Left ventricle myocardium superior (tissue), 1 donor: ENCODE measurements at regions of chr22 and their contacts with region 1.

Region 1: DNA sequence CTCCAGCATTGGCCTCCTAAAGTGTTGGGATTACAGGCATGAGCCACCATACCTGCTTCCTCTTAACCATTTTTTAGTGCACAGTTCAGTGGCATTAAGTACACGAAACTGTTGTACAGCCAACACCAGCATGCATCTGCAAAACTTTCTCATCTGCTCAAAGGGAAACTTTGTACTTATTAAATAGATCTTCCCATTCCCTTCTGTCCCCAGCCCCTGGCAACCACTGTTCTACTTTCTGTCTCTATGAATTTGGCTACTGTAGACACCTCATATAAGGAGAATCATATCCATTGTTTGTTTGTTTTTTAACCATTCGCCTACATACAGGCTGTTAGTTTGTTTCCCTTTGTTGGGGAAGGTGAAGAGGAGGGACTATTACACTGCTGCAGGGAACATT is 6.5 kb upstream of the EP300 start:
- DNase-seq: no peak
- ATAC-seq: no peak

Region 2: GRCh38 chr22:41022470-41023298 is 63.2 kb before region 1 on chr22:
- intact Hi-C with region 1: loop called (anchors 10 kb)
- DNase-seq: peak; percentile 97
- ATAC-seq: peak; percentile 95

Region 3: GRCh38 chr22:41070665-41071331 is 15.0 kb before region 1 on chr22:
- intact Hi-C with region 1: no loop called
- DNase-seq: no peak
- ATAC-seq: no peak